Posterior vena cava (tissue), 2 donors: ENCODE measurements at regions of chr1 and their contacts with region 1.

Region 1: GRCh38 chr1:67853704-67854103 is 20.4 kb upstream of the GNG12 start:
- DNase-seq: peak; percentile 84

Region 2: GRCh38 chr1:68103884-68104554 is 250.3 kb after region 1 on chr1:
- intact Hi-C with region 1: loop called in 1 of 2 experiments (anchors 10 kb)
- DNase-seq: no peak

Region 3: GRCh38 chr1:68111519-68112436 is 258.1 kb after region 1 on chr1:
- intact Hi-C with region 1: loop called (anchors 5 to 10 kb)
- DNase-seq: peak; percentile 91